ENCODE measurements at regions of chr1 and their contacts with region 1.

Region 1: DNA sequence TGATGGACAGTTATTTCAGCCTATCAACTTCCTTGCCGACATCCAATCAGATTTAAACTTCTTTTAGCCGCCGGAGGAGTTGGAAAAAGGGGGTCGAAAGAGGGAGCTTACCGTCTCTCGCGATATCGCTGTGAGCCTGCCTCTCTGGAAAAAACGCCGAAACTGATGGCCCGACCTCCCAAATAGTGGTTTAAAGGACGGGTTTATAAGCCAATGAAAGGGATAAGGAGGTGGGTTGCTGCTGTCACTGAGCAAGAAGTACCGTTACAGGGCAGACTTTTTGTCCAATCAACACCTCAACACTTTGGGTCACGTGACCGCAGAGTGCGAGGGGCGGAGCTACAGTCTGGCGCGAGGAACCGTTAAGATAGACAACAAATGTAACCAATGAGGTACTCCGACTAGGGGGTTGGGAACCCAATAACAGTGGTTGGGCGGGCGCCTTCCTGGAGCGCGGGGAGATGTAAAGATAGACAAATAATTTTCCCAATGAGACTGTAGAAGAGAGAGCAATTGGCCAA is at the start of gene RBM15:
- DNase-seq: peak; percentile 96
- ATAC-seq: peak; percentile 84
- H3K4me3 Mint-ChIP-seq: no peak within 1 kb of the TSS
- H3K27ac Mint-ChIP-seq: no peak within 1 kb of the TSS; the same call in 1 of the 2 replicates
- H3K4me1 Mint-ChIP-seq: peaks cover 52% of the 10 kb centered on the region
- H3K27me3 Mint-ChIP-seq: no peaks in the 10 kb centered on the region
- CTCF ChIP-seq: no peak
- total RNA-seq, gene RBM15: 43.5 to 50.6 TPM (median 44.8 TPM) in 3 replicates

Region 2: DNA sequence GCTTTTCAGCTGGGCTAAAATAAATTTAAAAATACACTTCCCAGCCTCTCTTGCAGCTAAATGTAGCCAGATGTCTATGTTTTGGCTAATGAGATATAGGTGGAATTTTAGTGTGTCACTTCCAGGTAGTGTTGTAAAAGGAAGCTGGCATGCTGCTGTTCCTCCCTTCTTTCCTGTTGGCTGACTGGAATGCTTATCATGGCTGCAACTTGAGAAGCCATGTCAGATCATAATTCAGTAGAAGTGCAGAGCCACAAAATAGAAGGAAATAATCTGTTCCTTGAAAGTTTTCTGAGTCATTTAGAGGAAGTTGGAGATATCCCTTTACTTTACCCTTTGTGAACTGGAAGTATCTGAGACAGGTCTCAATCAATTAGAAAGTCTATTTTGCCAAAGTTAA is 10.7 kb before region 1 on chr1:
- CTCF ChIA-PET with region 1: interaction called, 13 read pairs
- POLR2A ChIA-PET with region 1: interaction called, 4 read pairs
- DNase-seq: no peak
- ATAC-seq: no peak
- H3K4me3 Mint-ChIP-seq: no peak overlapping the region
- H3K27ac Mint-ChIP-seq: no peak overlapping the region
- H3K4me1 Mint-ChIP-seq: peaks cover 4% of the 10 kb centered on the region; the same call in 1 of the 2 replicates
- H3K27me3 Mint-ChIP-seq: no peaks in the 10 kb centered on the region
- CTCF ChIP-seq: no peak

Region 3: DNA sequence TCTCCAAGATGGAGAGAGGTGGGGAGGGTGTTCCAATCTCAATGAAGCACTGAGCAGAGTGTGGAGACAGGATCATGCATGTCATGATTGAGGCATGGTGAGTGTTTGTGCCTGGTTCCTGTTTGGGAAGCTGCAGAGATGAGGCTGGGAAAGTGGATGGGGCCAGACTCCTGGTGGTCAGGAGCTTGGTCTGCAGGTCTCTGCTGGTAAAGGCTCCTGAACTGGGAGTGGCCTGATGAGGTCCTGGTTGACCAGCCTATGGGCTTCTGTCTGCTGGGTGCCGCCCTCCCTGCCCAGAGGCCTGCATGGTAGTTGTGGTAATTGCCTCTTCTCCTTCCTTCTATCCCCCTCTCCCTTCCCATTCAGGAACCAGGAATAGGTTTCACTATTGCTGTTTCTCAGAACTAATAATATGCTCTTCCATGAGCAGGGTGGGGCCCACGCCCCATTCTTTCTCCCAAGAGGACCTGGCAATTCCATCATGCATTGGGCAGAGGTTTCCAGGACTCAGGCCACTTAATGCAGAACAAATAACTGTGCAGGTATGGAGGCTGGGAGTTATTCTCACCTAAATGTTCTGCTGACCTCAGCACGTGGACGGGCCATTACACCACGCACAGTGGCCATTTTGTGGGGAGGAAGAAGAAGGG is 136.6 kb after region 1 on chr1:
- CTCF ChIA-PET with region 1: no interaction called
- POLR2A ChIA-PET with region 1: no interaction called
- DNase-seq: no peak
- ATAC-seq: peak; percentile 93
- H3K4me3 Mint-ChIP-seq: no peak overlapping the region
- H3K27ac Mint-ChIP-seq: no peak overlapping the region
- H3K4me1 Mint-ChIP-seq: peaks cover 19% of the 10 kb centered on the region
- H3K27me3 Mint-ChIP-seq: no peaks in the 10 kb centered on the region; the same call in 1 of the 2 replicates
- CTCF ChIP-seq: no peak

Measured in WTC11 (cell line).